HAP-1 (cell line): ENCODE measurements at regions of chr2 and their contacts with region 1.

Region 1: GRCh38 chr2:163191372-163191771 is 352.8 kb upstream of the KCNH7 start:
- DNase-seq: peak; percentile 33 to 45
- H3K4me3 ChIP-seq: no peak overlapping the region
- H3K4me1 ChIP-seq: no peaks in the 10 kb centered on the region
- H3K27me3 ChIP-seq: no peaks in the 10 kb centered on the region

Region 2: GRCh38 chr2:162840621-162841246 is 350.6 kb before region 1 on chr2:
- in situ Hi-C with region 1: no loop called
- DNase-seq: peak; percentile 27 to 74
- H3K4me3 ChIP-seq: no peak overlapping the region
- H3K4me1 ChIP-seq: no peaks in the 10 kb centered on the region
- H3K27me3 ChIP-seq: no peaks in the 10 kb centered on the region

Region 3: GRCh38 chr2:164495491-164496223 is 1304.3 kb after region 1 on chr2:
- in situ Hi-C with region 1: loop called (anchors 25 kb)
- DNase-seq: peak; percentile 38 to 74
- H3K4me3 ChIP-seq: no peak overlapping the region
- H3K4me1 ChIP-seq: no peaks in the 10 kb centered on the region
- H3K27me3 ChIP-seq: peaks cover 6% of the 10 kb centered on the region; the same call in 1 of the 2 replicates